B cell (primary cell): ENCODE measurements at regions of chr16 and their contacts with region 1.

Region 1: GRCh38 chr16:53518550-53519416 is 15.8 kb upstream of the AKTIP start:
- DNase-seq: peak; percentile 84
- ATAC-seq: peak; percentile 89
- H3K4me3 ChIP-seq: peak overlapping the region; percentile 19 to 57 (median 24)
- H3K4me3 Mint-ChIP-seq: peak overlapping the region; percentile 83
- H3K27ac ChIP-seq: peak overlapping the region; percentile 79 to 87
- H3K27ac Mint-ChIP-seq: peak overlapping the region; percentile 88
- H3K4me1 ChIP-seq: peaks cover 42 to 44% of the 10 kb centered on the region in 2 donors
- H3K4me1 Mint-ChIP-seq: peaks cover 46% of the 10 kb centered on the region
- H3K27me3 ChIP-seq: no peaks in the 10 kb centered on the region
- H3K27me3 Mint-ChIP-seq: no peaks in the 10 kb centered on the region
- CTCF ChIP-seq: no peak

Region 2: GRCh38 chr16:53166099-53166498 is 352.7 kb before region 1 on chr16:
- CTCF ChIA-PET with region 1: no interaction called
- POLR2A ChIA-PET with region 1: no interaction called
- intact Hi-C with region 1: no loop called
- DNase-seq: no peak
- ATAC-seq: no peak
- H3K4me3 ChIP-seq: no peak overlapping the region
- H3K4me3 Mint-ChIP-seq: no peak overlapping the region
- H3K27ac ChIP-seq: no peak overlapping the region
- H3K27ac Mint-ChIP-seq: no peak overlapping the region
- H3K4me1 ChIP-seq: no peaks in the 10 kb centered on the region
- H3K4me1 Mint-ChIP-seq: peaks cover 11% of the 10 kb centered on the region
- H3K27me3 ChIP-seq: no peaks in the 10 kb centered on the region
- H3K27me3 Mint-ChIP-seq: no peaks in the 10 kb centered on the region
- CTCF ChIP-seq: no peak

Region 3: DNA sequence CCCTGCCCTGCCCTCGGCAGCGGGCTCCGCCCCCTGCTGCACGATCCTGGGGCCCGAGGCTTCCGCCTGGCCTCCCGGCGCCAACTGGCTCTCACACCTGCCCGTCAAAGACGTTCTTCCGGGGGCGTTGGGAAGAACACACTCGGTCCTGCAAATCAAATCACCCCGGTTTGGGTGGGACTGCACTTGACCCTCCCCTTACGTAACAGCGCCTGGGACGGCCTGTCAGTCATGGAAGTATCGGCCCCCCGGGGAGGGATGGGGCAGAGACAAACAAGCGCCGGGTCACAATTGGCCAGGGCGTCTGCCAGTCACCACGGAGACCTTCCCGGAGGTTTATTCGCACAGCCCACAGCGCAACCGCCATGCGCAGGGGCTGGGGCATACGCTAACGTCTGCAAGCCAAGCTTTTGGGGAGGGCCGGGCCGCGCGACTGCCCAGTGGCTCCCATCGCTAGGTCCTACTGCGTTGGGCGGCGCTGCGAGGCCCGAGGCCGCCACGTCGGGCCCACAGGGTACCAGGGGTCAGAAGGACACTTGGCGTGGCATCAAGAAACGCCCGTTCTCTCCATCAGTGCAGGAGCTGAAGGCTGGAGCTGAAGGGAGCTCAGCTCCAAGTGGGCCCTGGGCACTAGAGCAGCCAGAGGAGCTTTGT is 15.4 kb before region 1 on chr16:
- CTCF ChIA-PET with region 1: interaction called, 6 read pairs
- POLR2A ChIA-PET with region 1: interaction called, 25 read pairs
- intact Hi-C with region 1: loop called (anchors 1 kb)
- DNase-seq: peak; percentile 100
- ATAC-seq: peak; percentile 91
- H3K4me3 ChIP-seq: peak overlapping the region; percentile 52 to 90 (median 86)
- H3K4me3 Mint-ChIP-seq: peak overlapping the region; percentile 87
- H3K27ac ChIP-seq: peak overlapping the region; percentile 82 to 83
- H3K27ac Mint-ChIP-seq: peak overlapping the region; percentile 83
- H3K4me1 ChIP-seq: peaks cover 18 to 21% of the 10 kb centered on the region in 2 donors
- H3K4me1 Mint-ChIP-seq: peaks cover 31% of the 10 kb centered on the region
- H3K27me3 ChIP-seq: no peaks in the 10 kb centered on the region
- H3K27me3 Mint-ChIP-seq: no peaks in the 10 kb centered on the region
- CTCF ChIP-seq: no peak

Region 4: DNA sequence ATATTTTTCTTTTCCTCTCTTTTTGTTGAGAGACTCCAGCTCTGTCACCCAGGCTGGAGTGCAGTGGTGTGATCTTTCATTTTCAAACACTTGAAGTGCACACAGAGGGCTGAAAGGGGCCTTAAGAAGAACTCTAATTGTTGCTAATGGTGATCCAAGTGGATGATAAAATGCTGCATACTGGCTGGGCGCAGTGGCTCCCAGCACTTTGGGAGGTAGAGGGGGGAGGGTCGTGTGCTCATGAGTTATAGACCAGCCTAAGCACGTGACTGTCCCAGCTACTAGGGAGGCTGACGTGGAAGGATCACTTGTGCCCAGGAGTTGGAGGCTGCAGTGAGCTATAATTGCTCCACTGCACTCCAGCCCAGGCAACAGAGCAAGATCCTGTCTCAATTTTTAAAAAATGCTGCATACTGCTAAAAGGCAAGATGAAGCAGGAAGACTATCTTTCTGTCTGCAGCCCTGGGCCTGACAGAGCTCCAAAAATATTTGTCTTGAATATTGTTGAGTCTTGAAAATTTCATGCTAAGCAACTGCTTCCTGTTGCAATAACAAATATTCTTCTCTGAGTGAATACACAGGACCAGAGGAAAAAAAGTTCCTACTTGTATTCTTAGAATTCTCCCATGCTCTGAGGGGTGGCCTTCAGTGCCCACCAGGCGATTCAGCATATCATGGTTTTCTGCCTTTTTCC is 47.9 kb after region 1 on chr16:
- CTCF ChIA-PET with region 1: no interaction called
- POLR2A ChIA-PET with region 1: no interaction called
- intact Hi-C with region 1: no loop called
- DNase-seq: no peak
- ATAC-seq: no peak
- H3K4me3 ChIP-seq: no peak overlapping the region
- H3K4me3 Mint-ChIP-seq: no peak overlapping the region
- H3K27ac ChIP-seq: no peak overlapping the region
- H3K27ac Mint-ChIP-seq: no peak overlapping the region
- H3K4me1 ChIP-seq: no peaks in the 10 kb centered on the region
- H3K4me1 Mint-ChIP-seq: no peaks in the 10 kb centered on the region
- H3K27me3 ChIP-seq: no peaks in the 10 kb centered on the region
- H3K27me3 Mint-ChIP-seq: peaks cover 18% of the 10 kb centered on the region
- CTCF ChIP-seq: no peak

Region 5: DNA sequence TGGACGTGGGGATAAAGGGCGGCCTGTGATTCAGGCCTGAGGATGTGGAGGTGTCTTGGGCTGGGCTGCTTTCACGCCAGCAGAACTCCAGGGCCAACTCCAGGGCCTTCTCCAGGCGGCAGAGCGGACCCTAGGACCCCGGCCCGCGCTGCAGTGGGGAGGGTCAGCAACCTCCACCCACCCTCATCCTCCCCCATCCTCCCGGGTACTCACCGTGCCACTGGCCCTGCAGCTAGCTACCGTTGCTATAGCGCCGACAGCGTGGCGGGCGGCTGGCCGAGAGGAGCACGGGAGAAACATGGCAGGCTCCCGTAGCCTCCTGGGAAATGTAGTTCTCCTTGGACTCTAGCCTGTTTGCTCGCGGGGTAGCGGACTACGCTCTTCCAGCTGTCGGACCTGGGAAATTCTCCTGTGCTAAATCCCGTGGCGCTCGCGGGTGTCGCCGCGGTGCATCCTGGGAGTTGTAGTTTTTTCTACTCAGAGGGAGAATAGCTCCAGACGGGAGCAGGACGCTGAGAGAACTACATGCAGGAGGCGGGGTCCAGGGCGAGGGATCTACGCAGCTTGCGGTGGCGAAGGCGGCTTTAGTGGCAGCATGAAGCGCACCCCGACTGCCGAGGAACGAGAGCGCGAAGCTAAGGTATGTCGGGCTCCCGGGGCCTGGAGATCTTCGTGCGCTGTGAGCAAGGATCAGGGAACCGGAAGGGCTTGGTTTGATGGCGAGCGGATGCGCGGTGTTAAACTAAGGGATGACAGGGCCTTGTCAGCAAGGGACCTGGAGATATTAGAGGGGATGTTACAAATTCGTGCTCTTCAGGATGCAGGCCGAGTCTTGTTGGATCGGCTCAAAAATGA is 185.0 kb after region 1 on chr16 and contains the starts of genes FTO and RPGRIP1L:
- CTCF ChIA-PET with region 1: no interaction called
- POLR2A ChIA-PET with region 1: interaction called, 7 read pairs
- intact Hi-C with region 1: loop called (anchors 5 kb)
- DNase-seq: peak; percentile 97
- ATAC-seq: peak; percentile 96
- H3K4me3 ChIP-seq: peak within 1 kb of the TSS; percentile 60 to 87 (median 75)
- H3K4me3 Mint-ChIP-seq: peak within 1 kb of the TSS; percentile 99
- H3K27ac ChIP-seq: peak within 1 kb of the TSS; percentile 42 to 75
- H3K27ac Mint-ChIP-seq: peak within 1 kb of the TSS; percentile 90
- H3K4me1 ChIP-seq: peaks cover 15 to 17% of the 10 kb centered on the region in 2 donors
- H3K4me1 Mint-ChIP-seq: peaks cover 33% of the 10 kb centered on the region
- H3K27me3 ChIP-seq: no peaks in the 10 kb centered on the region
- H3K27me3 Mint-ChIP-seq: no peaks in the 10 kb centered on the region
- CTCF ChIP-seq: no peak
- total RNA-seq, gene FTO: 68.5 and 71.3 TPM in 2 replicates
- total RNA-seq, gene RPGRIP1L: 7.0 and 7.1 TPM in 2 replicates